ENCODE measurements at regions of chr14 and their contacts with region 1.

Region 1: GRCh38 chr14:100192672-100193416 is 33.4 kb upstream of the DEGS2 start:
- DNase-seq: peak; percentile 100
- ATAC-seq: peak; percentile 100
- H3K4me3 Mint-ChIP-seq: peak overlapping the region; percentile 70
- H3K27ac Mint-ChIP-seq: peak overlapping the region; percentile 92
- H3K4me1 Mint-ChIP-seq: peaks cover 13% of the 10 kb centered on the region
- H3K27me3 Mint-ChIP-seq: no peaks in the 10 kb centered on the region

Region 2: DNA sequence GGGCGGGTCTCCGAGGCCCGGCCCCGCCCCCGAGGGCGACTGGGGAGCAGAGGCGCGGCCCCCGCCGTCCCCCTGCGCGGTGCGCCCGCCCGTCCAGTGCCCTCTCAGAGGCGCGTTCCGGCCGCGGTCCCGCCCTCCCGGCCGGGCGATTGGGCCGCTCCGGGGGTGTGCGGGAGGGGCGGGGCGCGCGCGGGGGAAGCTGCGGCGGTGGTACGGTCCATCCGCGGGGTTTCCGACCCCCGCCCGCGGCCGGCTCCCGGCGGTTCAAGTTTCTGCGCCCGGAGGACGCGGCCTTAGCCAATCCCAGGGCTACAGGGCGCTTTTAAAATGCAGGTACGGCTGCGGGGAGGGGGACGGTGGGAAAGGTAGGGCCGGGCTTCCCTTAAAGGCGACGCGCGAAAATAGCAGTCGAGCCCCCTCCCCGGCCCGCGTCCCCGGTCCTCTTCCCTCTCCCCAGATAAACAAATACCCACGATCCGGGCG is 588.5 kb before region 1 on chr14:
- CTCF ChIA-PET with region 1: no interaction called
- POLR2A ChIA-PET with region 1: no interaction called
- intact Hi-C with region 1: loop called in 1 of 2 experiments (anchors 1 kb)
- DNase-seq: peak; percentile 96
- ATAC-seq: peak; percentile 94
- H3K4me3 Mint-ChIP-seq: peak overlapping the region; percentile 72
- H3K27ac Mint-ChIP-seq: peak overlapping the region; percentile 72
- H3K4me1 Mint-ChIP-seq: peaks cover 28% of the 10 kb centered on the region
- H3K27me3 Mint-ChIP-seq: peaks cover 2% of the 10 kb centered on the region

Region 3: DNA sequence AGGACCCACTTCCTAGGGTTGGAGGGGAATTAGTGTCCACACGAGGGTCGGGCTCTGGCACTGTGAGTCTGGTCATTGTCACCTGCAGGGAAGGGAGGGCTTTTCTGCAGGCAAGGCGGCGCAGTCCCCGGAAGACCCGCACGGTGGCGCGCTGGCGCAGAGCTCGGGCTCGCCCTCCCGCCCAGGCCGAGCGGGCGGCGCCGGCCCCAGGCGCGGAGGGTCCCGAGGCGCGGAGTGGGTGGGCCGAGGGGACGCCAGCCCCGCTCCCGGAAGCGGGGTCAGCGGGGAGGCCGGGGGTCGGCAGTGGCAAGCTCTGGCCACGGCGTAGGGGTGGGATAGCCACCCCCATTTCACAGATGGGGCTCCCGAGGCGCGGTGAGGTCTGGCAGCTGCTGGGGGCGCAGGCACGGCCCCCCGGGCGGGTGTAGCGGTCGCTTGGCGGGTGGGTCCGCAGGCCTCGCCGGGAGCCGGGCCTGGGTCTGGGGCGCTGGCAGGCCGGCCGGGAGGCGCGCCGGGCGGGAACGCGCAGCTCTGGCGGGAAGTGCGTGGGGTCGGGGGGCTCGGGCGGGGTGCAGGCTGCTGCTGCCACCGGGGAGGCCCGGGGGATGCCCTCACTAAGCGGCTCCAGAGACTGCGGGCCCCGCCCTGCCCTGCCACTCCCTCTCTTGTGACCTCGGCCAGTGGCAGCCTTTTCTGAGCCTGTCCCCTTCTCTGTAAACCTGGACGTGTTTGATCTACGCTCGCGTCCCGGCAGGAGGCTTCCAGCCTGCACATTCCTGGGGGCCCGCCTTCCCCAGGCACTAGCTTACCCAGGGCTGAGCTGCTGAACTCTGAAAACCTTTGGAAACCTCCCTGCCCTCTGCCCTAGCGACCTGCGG is 462.6 kb before region 1 on chr14:
- CTCF ChIA-PET with region 1: no interaction called
- POLR2A ChIA-PET with region 1: no interaction called
- intact Hi-C with region 1: no loop called
- DNase-seq: peak; percentile 85
- ATAC-seq: peak; percentile 90
- H3K4me3 Mint-ChIP-seq: peak overlapping the region; percentile 30
- H3K27ac Mint-ChIP-seq: no peak overlapping the region
- H3K4me1 Mint-ChIP-seq: no peaks in the 10 kb centered on the region
- H3K27me3 Mint-ChIP-seq: peaks cover 20% of the 10 kb centered on the region

Region 4: GRCh38 chr14:99971087-99971940 is 221.5 kb before region 1 on chr14:
- CTCF ChIA-PET with region 1: interaction called, 16 read pairs
- POLR2A ChIA-PET with region 1: interaction called, 6 read pairs
- intact Hi-C with region 1: loop called in 1 of 2 experiments (anchors 1 kb)
- DNase-seq: peak; percentile 93
- ATAC-seq: peak; percentile 87
- H3K4me3 Mint-ChIP-seq: peak overlapping the region; percentile 98
- H3K27ac Mint-ChIP-seq: no peak overlapping the region
- H3K4me1 Mint-ChIP-seq: peaks cover 21% of the 10 kb centered on the region
- H3K27me3 Mint-ChIP-seq: peaks cover 21% of the 10 kb centered on the region

Region 5: DNA sequence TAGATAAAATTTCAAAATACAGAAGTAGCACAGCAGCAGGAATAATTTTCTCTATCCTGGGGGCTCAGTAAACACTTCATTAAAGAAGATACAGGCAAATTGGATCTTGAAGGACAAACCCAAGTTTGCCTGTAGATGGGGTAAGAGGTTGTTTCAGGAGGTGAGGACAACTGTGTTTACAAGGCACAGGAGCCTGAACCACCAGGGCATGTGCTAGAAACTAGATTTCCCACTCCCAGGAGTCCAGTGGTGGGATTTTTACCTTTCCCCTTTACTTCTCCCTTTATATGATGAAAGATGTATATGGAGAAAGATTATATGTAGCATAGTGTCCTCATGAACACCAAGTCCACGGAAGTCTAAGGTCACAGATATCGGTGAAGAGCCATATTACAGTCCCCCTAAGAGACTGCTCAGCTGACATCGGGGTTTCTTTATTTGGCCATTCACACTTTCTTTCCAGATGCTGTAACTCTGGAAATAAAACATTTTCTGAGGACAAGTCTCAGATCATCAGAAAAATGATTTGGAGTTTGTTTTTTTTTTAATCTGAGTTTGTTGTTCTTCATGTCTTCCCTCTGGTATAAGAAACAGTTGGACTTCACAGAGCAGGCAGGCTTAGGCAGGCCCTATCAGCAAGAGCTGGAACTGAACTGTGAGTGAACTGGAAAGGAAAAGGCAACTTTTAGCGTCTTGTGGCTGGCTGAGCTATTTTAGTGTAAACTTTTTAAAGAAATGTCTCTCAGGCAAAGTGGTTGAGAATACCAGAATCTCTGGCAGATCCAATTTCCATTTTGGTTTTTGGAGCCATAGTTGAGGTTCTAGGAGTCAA is 135.7 kb before region 1 on chr14:
- CTCF ChIA-PET with region 1: interaction called, 5 read pairs
- POLR2A ChIA-PET with region 1: no interaction called
- intact Hi-C with region 1: loop called in 1 of 2 experiments (anchors 2 kb)
- DNase-seq: peak; percentile 24
- ATAC-seq: peak; percentile 37
- H3K4me3 Mint-ChIP-seq: peak overlapping the region; percentile 18
- H3K27ac Mint-ChIP-seq: peak overlapping the region; percentile 81
- H3K4me1 Mint-ChIP-seq: peaks cover 58% of the 10 kb centered on the region
- H3K27me3 Mint-ChIP-seq: no peaks in the 10 kb centered on the region

Region 6: GRCh38 chr14:100132161-100132902 is 60.5 kb before region 1 on chr14:
- CTCF ChIA-PET with region 1: no interaction called
- POLR2A ChIA-PET with region 1: no interaction called
- intact Hi-C with region 1: no loop called
- DNase-seq: no peak
- ATAC-seq: no peak
- H3K4me3 Mint-ChIP-seq: no peak overlapping the region
- H3K27ac Mint-ChIP-seq: no peak overlapping the region
- H3K4me1 Mint-ChIP-seq: no peaks in the 10 kb centered on the region
- H3K27me3 Mint-ChIP-seq: no peaks in the 10 kb centered on the region

Region 7: DNA sequence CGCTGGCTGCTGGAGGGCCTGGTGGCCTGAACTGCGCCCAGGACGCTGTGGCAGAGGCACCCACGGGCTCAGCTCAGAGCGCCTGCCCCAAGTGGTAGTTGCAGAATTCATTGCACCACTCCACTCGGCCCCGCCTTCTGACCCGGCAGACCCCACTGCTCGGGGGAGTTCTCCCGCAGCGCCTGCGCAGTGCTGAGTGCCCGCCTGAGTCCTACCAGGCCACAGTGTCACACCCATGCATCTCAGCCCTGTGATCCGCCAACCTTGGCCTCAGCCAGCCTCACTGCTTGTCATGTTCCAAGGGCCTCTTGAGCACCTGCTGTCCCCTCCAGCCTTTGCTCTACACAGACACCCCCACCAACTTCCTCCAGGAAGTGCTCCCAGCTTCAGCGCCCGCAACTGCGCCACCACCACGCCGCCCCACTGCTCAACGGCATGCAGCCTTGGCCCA is 45.6 kb before region 1 on chr14:
- CTCF ChIA-PET with region 1: interaction called, 4 read pairs
- POLR2A ChIA-PET with region 1: no interaction called
- intact Hi-C with region 1: loop called in 1 of 2 experiments (anchors 2 kb)
- DNase-seq: peak; percentile 65
- ATAC-seq: peak; percentile 50
- H3K4me3 Mint-ChIP-seq: peak overlapping the region; percentile 11
- H3K27ac Mint-ChIP-seq: peak overlapping the region; percentile 70
- H3K4me1 Mint-ChIP-seq: peaks cover 15% of the 10 kb centered on the region
- H3K27me3 Mint-ChIP-seq: no peaks in the 10 kb centered on the region

Region 8: DNA sequence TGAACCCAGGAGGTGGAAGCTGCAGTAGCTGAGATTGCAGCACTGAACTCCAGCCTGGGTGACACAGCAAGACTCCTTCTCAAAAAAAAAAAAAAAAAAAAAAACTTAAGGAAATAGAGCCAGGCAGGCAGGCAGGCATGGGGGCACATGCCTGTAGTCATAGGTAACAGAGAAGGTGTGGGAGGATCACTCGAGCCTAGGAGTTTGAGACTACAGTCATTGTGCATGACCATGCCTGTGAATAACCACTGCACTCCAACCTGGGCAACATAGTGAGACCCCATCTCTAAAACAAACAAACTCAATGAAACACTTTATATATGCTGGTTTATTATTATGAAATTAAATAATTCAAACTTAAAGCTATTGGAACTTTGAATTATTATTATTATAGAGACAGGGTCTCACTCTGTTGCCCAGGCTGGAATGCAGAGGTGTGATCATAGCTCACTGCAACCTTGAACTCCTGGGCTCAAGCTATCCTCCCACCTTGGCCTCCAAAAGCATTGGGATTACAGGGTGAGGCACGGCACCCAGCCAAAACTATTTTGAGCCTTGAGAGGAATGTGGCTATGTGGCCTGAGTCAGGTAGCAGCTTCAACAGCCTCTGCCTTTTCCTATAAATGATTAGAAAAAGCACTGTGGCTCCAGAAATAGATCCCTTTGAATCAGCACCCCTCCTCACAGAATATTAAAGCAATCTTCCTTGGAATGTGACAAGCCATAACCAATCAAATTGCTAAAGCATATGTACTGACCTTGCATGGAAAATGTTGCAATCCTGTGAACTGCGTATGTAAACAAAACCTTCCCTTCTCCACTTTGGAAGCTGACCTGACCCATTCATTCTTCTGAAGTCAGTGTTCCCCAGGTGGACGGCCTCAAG is 11.3 kb after region 1 on chr14:
- CTCF ChIA-PET with region 1: interaction called, 36 read pairs
- POLR2A ChIA-PET with region 1: no interaction called
- intact Hi-C with region 1: no loop called
- DNase-seq: no peak
- ATAC-seq: peak; percentile 51
- H3K4me3 Mint-ChIP-seq: no peak overlapping the region
- H3K27ac Mint-ChIP-seq: no peak overlapping the region
- H3K4me1 Mint-ChIP-seq: no peaks in the 10 kb centered on the region
- H3K27me3 Mint-ChIP-seq: no peaks in the 10 kb centered on the region

Region 9: GRCh38 chr14:100221533-100222223 is 28.8 kb after region 1 on chr14:
- CTCF ChIA-PET with region 1: interaction called, 55 read pairs
- POLR2A ChIA-PET with region 1: interaction called, 6 read pairs
- intact Hi-C with region 1: no loop called
- DNase-seq: peak; percentile 84
- ATAC-seq: peak; percentile 93
- H3K4me3 Mint-ChIP-seq: no peak overlapping the region
- H3K27ac Mint-ChIP-seq: no peak overlapping the region
- H3K4me1 Mint-ChIP-seq: peaks cover 7% of the 10 kb centered on the region
- H3K27me3 Mint-ChIP-seq: no peaks in the 10 kb centered on the region

Measured in activated CD4-positive, alpha-beta T cell treated with anti-CD3 and anti-CD28 coated beads for 36 hours (primary cell).